Panc1 (cell line): ENCODE measurements at regions of chr9 and their contacts with region 1.

Region 1: DNA sequence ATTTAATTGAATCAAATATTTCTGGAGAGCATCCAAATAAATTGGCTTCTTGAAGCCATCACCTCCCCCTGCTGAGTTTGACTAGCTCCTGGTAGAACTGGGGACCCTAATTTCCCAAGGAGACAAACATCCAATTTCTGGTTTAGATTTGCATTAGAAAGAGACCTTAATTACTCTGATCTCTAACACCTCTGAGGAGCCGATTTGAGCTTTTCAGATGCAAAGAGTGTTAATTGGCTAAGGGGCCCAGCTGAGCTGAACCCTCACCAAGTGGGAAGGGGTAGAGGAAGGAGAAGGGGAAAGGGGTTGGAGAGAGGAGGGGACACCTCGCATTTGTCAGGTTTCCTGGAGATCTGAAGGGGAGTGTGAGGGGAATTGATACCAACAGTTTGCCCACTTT is 145.4 kb upstream of the SHB start:
- DNase-seq: no peak
- ATAC-seq: no peak
- H3K4me3 ChIP-seq: no peak overlapping the region
- H3K27ac ChIP-seq: no peak overlapping the region
- H3K4me1 ChIP-seq: no peaks in the 10 kb centered on the region
- H3K27me3 ChIP-seq: no peaks in the 10 kb centered on the region
- CTCF ChIP-seq: no peak

Region 2: GRCh38 chr9:37811906-37812476 is 402.4 kb before region 1 on chr9:
- CTCF ChIA-PET with region 1: no interaction called
- POLR2A ChIA-PET with region 1: interaction called, 11 read pairs
- in situ Hi-C with region 1: no loop called
- intact Hi-C with region 1: no loop called
- DNase-seq: no peak
- ATAC-seq: no peak
- H3K4me3 ChIP-seq: no peak overlapping the region
- H3K27ac ChIP-seq: no peak overlapping the region
- H3K4me1 ChIP-seq: no peaks in the 10 kb centered on the region
- H3K27me3 ChIP-seq: no peaks in the 10 kb centered on the region
- CTCF ChIP-seq: no peak

Region 3: GRCh38 chr9:37994639-37995347 is 219.6 kb before region 1 on chr9:
- CTCF ChIA-PET with region 1: no interaction called
- POLR2A ChIA-PET with region 1: no interaction called
- in situ Hi-C with region 1: no loop called
- intact Hi-C with region 1: loop called (anchors 10 kb)
- DNase-seq: no peak
- ATAC-seq: peak; percentile 34
- H3K4me3 ChIP-seq: no peak overlapping the region
- H3K27ac ChIP-seq: peak overlapping the region; percentile 20; the same call in 1 of the 2 replicates
- H3K4me1 ChIP-seq: peaks cover 33% of the 10 kb centered on the region
- H3K27me3 ChIP-seq: no peaks in the 10 kb centered on the region
- CTCF ChIP-seq: no peak

Region 4: GRCh38 chr9:38195737-38196161 is 18.7 kb before region 1 on chr9:
- CTCF ChIA-PET with region 1: interaction called, 11 read pairs
- POLR2A ChIA-PET with region 1: no interaction called
- in situ Hi-C with region 1: no loop called
- intact Hi-C with region 1: no loop called
- DNase-seq: no peak
- ATAC-seq: no peak
- H3K4me3 ChIP-seq: no peak overlapping the region
- H3K27ac ChIP-seq: no peak overlapping the region
- H3K4me1 ChIP-seq: no peaks in the 10 kb centered on the region
- H3K27me3 ChIP-seq: no peaks in the 10 kb centered on the region
- CTCF ChIP-seq: no peak